ENCODE measurements at regions of chr11 and their contacts with region 1.

Region 1: GRCh38 chr11:55854704-55855103 is 16.2 kb downstream of the OR5D16 start:
- DNase-seq: no peak
- H3K4me3 Mint-ChIP-seq: no peak overlapping the region
- H3K27ac Mint-ChIP-seq: no peak overlapping the region
- H3K4me1 Mint-ChIP-seq: no peaks in the 10 kb centered on the region
- H3K27me3 Mint-ChIP-seq: no peaks in the 10 kb centered on the region

Region 2: DNA sequence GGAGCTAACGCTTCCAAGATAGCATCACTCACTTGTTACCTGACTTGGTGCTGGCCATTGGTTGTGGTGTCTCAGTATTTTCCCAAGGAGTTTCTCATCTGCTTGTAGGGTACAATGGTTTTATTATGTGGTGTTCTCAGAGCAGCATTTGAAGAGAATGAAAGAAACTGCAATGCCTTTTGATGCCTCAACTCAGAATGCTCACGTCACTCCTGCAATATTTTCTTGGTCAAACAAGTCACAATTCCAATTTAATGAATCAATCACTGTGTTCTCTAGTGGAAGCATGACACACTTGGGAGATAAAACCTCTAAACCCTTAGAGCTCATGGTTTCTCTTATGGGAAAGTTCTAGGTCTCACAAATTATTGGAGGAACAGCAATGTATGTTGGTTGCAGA is 61.4 kb before region 1 on chr11:
- CTCF ChIA-PET with region 1: no interaction called
- POLR2A ChIA-PET with region 1: no interaction called
- intact Hi-C with region 1: loop called (anchors 10 kb)
- DNase-seq: no peak
- H3K4me3 Mint-ChIP-seq: no peak overlapping the region
- H3K27ac Mint-ChIP-seq: no peak overlapping the region
- H3K4me1 Mint-ChIP-seq: no peaks in the 10 kb centered on the region
- H3K27me3 Mint-ChIP-seq: no peaks in the 10 kb centered on the region

Region 3: DNA sequence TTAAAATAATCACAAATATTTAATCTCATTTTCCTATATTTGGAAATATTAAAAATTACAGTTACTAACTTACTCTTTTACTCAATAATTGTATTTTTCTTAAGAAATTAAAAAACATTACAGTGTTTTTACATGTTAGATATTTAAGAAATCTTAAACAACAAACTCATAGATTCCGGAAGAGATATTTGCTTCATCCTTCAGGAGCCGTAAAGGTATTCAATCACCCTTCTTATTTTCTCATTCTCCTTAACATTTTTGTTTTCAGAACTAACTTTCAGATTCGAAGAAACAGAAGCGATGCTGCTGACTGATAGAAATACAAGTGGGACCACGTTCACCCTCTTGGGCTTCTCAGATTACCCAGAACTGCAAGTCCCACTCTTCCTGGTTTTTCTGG is 35.4 kb before region 1 on chr11 and contains the start of gene OR5D18:
- CTCF ChIA-PET with region 1: no interaction called
- POLR2A ChIA-PET with region 1: no interaction called
- intact Hi-C with region 1: no loop called
- DNase-seq: no peak
- H3K4me3 Mint-ChIP-seq: no peak within 1 kb of the TSS
- H3K27ac Mint-ChIP-seq: no peak within 1 kb of the TSS
- H3K4me1 Mint-ChIP-seq: no peaks in the 10 kb centered on the region
- H3K27me3 Mint-ChIP-seq: no peaks in the 10 kb centered on the region
- total RNA-seq, gene OR5D18: not detected